ENCODE measurements at regions of chr22 and their contacts with region 1.

Region 1: GRCh38 chr22:37817705-37818408 is 5.3 kb upstream of the GALR3 start:
- DNase-seq: peak; percentile 86
- ATAC-seq: peak; percentile 93 to 95

Region 2: DNA sequence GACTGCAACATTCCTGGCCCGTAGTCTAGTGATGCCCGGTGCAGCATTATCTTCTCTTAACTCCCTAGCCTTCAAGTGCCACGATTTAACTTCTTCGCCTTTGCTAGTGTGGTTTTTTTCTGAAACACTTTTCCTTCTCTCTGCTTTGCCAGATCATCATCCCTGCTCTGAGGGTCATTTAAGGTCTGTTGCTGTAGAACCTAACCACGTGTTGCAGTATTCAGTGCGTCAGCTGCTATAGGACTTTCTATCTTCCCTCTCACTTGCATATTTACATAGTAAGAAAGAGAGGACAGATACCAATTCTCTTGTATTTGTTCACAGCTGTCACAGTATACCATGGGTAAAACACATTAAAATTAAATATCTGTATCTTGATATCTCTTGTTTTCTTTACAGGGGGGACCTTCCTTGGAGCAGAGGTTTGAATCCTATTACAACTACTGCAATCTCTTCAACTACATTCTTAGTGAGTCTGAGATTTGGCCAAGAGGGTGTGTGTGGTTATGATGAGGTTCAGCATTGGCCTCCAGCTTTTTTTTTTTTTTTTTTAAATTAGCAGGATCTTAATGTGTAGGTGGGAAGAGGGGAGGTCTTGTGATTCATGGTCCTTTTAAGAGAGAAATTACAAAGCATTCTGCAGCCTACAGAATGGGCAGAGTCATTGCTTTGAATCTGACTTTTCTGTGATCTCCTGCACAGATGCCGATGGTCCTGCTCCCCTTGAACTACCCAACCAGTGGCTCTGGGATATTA is 44.9 kb after region 1 on chr22:
- intact Hi-C with region 1: loop called (anchors 1 to 2 kb)
- DNase-seq: no peak
- ATAC-seq: peak in 1 of 2 donors; percentile 28

Region 3: GRCh38 chr22:37961062-37961461 is 143.2 kb after region 1 on chr22:
- intact Hi-C with region 1: loop called (anchors 2 to 5 kb)
- DNase-seq: no peak
- ATAC-seq: no peak

Region 4: GRCh38 chr22:37965940-37966664 is 148.2 kb after region 1 on chr22:
- intact Hi-C with region 1: loop called (anchors 2 to 5 kb)
- DNase-seq: no peak
- ATAC-seq: peak; percentile 10 to 12

Measured in left cardiac atrium (tissue), 4 donors.